Left ventricle myocardium superior (tissue), 1 donor: ENCODE measurements at regions of chr10 and their contacts with region 1.

Region 1: GRCh38 chr10:126199221-126199998 is 188.9 kb downstream of the ADAM12 start:
- DNase-seq: no peak
- ATAC-seq: no peak

Region 2: DNA sequence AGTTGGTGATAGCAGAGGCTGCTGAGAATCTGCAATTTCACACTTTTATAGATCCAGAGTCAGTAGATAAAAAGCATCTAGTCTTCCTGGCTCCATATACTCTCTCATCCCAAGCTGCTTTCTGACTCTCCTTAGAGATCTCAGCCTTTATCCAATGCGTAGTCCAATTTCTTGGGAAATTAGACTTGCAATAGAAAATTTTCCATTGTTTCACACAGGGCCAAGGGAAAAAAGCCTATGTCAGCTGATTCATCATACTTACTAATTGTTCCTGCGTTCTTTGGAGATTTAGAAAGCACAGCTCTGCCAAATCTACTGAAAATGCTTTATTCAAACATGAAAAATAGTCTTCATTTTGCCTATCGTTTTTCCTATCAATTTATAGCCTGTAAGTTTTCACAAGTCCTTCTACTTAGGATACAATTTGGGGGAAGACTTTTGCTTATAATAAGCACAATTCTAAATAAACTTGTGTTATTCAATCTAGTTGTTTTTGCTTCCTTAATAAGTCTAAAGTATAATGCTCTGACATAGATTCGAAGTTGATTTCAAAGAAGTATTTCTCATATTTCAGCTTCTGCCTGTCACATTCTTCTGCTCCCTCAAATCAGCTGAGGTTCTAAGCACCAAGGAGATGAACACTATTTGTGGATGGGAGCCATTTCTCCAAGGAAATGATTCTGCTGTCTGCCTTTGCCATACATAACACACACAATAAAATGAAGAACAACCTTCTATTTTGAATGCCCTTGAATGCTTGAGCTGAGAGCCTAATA is 23.5 kb after region 1 on chr10:
- intact Hi-C with region 1: loop called (anchors 2 kb)
- DNase-seq: no peak
- ATAC-seq: peak; percentile 64

Region 3: GRCh38 chr10:126252884-126253618 is 53.6 kb after region 1 on chr10:
- intact Hi-C with region 1: no loop called
- DNase-seq: no peak
- ATAC-seq: peak; percentile 91

Region 4: GRCh38 chr10:126309193-126309883 is 109.9 kb after region 1 on chr10:
- intact Hi-C with region 1: no loop called
- DNase-seq: no peak
- ATAC-seq: no peak